HEK293 (cell line): ENCODE measurements at regions of chr5 and their contacts with region 1.

Region 1: GRCh38 chr5:119411935-119412602 is 40.2 kb upstream of the HSD17B4 start:
- H3K4me3 ChIP-seq: peak overlapping the region; percentile 56
- H3K27ac ChIP-seq: peak overlapping the region; percentile 28; the same call in 1 of the 2 replicates
- H3K4me1 ChIP-seq: no peaks in the 10 kb centered on the region
- CTCF ChIP-seq: peak; percentile 73

Region 2: GRCh38 chr5:117713585-117714198 is 1698.4 kb before region 1 on chr5:
- CTCF ChIA-PET with region 1: no interaction called
- POLR2A ChIA-PET with region 1: no interaction called
- H3K4me3 ChIP-seq: no peak overlapping the region
- H3K27ac ChIP-seq: no peak overlapping the region
- H3K4me1 ChIP-seq: no peaks in the 10 kb centered on the region
- CTCF ChIP-seq: no peak

Region 3: DNA sequence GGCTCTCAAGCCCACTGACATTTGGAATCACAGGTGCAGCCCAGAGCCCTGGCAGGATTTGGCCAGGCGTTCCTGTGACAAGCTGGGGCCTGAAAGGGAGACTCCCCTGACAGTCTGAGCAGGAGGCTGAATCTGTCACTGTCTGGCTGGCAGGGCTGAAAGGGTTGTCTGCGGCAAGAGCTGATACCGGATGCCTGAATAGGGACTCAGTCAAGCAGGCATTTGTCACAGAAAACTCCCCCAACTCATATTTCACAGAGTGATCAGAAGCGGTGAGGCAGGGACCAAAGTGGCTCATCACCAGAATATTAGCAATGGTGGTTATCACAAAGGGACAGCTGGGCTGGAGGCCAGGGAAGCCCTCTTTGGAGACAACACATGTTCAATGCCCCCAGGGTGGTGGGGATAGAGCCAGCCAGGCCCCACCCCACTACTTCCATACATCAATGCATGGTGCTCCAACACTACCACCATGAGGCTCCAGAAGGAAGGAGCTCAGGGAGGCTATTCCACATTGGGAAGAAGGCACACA is 719.2 kb before region 1 on chr5:
- CTCF ChIA-PET with region 1: no interaction called
- POLR2A ChIA-PET with region 1: no interaction called
- H3K4me3 ChIP-seq: no peak overlapping the region
- H3K27ac ChIP-seq: no peak overlapping the region
- H3K4me1 ChIP-seq: no peaks in the 10 kb centered on the region
- CTCF ChIP-seq: no peak

Region 4: DNA sequence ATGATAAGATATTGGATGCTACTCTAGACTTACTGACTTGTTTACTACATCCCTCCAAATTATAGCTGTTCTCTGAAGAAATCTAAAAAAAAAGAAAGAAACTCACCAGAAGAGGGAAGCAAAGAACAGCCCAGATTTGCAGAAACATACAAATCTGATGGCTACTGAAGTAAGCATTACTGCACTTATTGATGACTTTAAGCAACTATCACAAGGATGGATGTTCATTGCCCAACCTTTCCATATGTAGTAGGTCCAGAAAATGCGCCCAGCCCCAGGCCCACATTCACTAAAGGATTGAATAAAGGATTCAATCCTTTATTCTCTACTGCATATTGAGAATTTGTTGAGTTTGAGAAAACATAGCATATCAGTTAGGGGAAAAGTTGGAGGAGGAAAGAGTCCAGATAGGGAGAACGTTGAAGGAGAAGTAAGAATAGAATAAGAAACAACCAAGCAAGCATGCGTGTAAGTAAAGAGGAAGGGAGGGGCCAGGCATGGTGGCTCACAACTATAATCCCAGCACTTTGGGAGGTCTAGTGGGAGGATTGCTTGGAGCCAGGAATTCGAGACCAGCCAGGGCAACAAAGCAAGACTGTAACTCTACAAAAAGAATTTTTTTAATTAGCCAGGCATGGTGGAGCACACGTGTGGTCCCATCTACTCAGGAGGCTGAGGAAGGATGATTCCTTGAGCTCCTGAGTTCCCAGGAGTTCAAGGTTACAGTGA is 389.9 kb before region 1 on chr5:
- CTCF ChIA-PET with region 1: interaction called, 46 read pairs
- POLR2A ChIA-PET with region 1: no interaction called
- H3K4me3 ChIP-seq: no peak overlapping the region
- H3K27ac ChIP-seq: no peak overlapping the region
- H3K4me1 ChIP-seq: no peaks in the 10 kb centered on the region
- CTCF ChIP-seq: 0 out of 2 replicates have a peak, but pooled peaks have one; percentile 38

Region 5: DNA sequence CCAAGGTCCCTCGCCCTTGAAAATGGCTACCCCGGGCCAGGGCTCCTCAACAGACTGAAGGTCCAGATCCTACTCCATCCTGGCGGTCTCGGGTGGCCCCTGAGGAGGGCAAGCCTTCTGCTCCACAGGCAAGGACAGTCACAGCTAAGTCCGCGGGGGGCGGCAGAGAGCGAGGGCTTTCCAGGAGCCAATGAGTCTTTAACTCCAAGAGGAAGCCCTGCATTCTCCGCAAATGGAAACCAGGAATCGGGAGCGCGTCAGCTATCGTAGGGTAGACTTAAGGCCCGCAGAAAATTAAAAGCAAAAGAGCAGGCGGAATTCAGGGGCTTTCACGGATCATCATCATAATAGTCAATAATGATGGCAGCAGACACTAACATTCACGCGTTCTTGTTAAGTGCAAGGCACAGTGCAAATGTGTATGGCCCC is 144.1 kb before region 1 on chr5:
- CTCF ChIA-PET with region 1: interaction called, 9 read pairs
- POLR2A ChIA-PET with region 1: interaction called, 10 read pairs
- H3K4me3 ChIP-seq: peak overlapping the region; percentile 60
- H3K27ac ChIP-seq: peak overlapping the region; percentile 88; the same call in 1 of the 2 replicates
- H3K4me1 ChIP-seq: peaks cover 25% of the 10 kb centered on the region
- CTCF ChIP-seq: no peak

Region 6: GRCh38 chr5:119315516-119315949 is 96.5 kb before region 1 on chr5:
- CTCF ChIA-PET with region 1: interaction called, 20 read pairs
- POLR2A ChIA-PET with region 1: no interaction called
- H3K4me3 ChIP-seq: no peak overlapping the region
- H3K27ac ChIP-seq: no peak overlapping the region
- H3K4me1 ChIP-seq: peaks cover 5% of the 10 kb centered on the region; the same call in 1 of the 2 replicates
- CTCF ChIP-seq: no peak

Region 7: DNA sequence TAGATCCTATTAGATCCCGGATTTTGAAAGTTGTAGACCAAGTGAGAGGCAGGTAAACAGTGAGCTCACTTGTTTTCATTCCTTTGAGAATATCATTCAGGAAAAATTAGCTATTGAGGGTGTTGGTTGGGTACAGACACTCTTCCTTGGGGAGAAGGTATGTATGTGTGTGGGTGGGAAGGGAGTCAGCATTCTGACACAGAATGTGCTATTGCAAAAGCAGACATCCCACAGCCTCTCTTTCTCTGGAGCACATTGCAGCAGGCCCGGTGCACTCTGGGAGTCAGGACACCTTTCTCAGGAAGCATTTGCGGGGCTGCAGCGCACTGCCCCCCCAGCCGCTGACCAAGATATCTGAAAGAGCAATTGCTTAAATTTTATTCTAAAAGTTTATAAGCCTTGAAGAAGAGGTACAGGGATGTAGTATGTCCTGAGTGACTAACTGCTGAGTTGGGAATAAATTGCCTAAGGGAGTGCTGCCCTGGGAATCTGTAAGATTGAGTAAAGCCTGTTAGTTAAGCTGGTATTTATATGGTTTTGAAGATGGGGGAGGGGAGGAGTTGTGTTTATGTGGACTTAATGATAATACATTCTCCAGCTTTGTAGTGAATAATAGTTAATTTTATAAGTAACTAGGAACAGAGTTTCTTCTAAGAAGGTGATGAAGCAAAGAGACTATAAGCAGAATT is 51.0 kb before region 1 on chr5:
- CTCF ChIA-PET with region 1: interaction called, 10 read pairs
- POLR2A ChIA-PET with region 1: no interaction called
- H3K4me3 ChIP-seq: no peak overlapping the region
- H3K27ac ChIP-seq: no peak overlapping the region
- H3K4me1 ChIP-seq: peaks cover 33% of the 10 kb centered on the region
- CTCF ChIP-seq: no peak

Region 8: GRCh38 chr5:119397518-119398380 is 14.3 kb before region 1 on chr5:
- CTCF ChIA-PET with region 1: interaction called, 29 read pairs
- POLR2A ChIA-PET with region 1: no interaction called
- H3K4me3 ChIP-seq: no peak overlapping the region
- H3K27ac ChIP-seq: no peak overlapping the region
- H3K4me1 ChIP-seq: peaks cover 6% of the 10 kb centered on the region; the same call in 1 of the 2 replicates
- CTCF ChIP-seq: no peak